HepG2 (cell line): ENCODE measurements at regions of chr17 and their contacts with region 1.

Region 1: GRCh38 chr17:48970224-48970623 is 1.8 kb upstream of the GIP start:
- DNase-seq: no peak
- ATAC-seq: no peak
- H3K4me3 ChIP-seq: no peak overlapping the region
- H3K27ac ChIP-seq: peak overlapping the region; percentile 79
- H3K4me1 ChIP-seq: peaks cover 56% of the 10 kb centered on the region
- H3K27me3 ChIP-seq: no peaks in the 10 kb centered on the region
- CTCF ChIP-seq: no peak
- EP300 ChIP-seq: no peak
- POLR2A ChIP-seq: no peak
- RAD21 ChIP-seq: no peak

Region 2: DNA sequence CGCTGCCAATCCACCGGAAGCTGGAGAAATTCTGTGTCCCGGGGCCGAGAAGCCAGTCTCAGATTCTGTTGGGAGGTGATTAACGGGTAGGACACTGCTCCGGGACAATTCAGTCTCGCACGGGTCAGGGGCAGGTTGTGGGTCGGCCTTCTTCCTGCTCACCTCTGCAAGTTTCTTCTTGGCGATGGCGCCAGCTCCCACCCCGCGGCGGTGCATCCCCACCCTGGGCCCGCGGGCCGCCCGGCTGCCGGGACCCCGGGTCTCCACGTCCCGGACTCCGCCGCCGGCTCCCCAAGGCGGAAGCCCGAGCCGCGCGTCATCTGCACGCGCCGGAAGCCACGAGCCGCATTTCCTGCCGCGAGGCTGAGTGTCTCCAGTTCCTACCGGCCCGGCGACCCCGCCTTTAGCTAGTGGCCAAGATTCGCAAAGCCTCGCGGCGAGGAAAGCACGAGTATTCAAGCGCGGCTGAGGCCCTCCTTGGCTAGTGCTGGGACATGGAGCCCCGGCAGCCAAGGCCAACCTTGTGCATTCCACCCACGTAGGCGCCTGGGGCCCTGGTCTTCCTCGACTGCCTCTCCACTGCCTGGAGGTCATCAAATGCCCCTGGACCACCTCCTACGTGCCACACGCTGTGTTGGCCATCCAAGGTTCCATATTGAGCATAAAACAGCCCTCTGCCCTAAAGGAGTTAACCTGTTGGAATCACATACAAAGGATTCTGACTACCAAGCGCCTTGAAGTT is 25.5 kb before region 1 on chr17 and contains the start of gene SNF8:
- CTCF ChIA-PET with region 1: no interaction called
- POLR2A ChIA-PET with region 1: interaction called, 69 read pairs
- in situ Hi-C with region 1: no loop called
- intact Hi-C with region 1: no loop called
- DNase-seq: peak; percentile 90
- ATAC-seq: peak; percentile 97
- H3K4me3 ChIP-seq: peak within 1 kb of the TSS; percentile 75 to 91 (median 90)
- H3K27ac ChIP-seq: peak within 1 kb of the TSS; percentile 86
- H3K4me1 ChIP-seq: peaks cover 27% of the 10 kb centered on the region
- H3K27me3 ChIP-seq: no peaks in the 10 kb centered on the region; a peak in 1 of 5 replicates
- CTCF ChIP-seq: peak; percentile 35; the same call in 1 of the 2 replicates
- EP300 ChIP-seq: no peak; a peak in 1 of 4 replicates
- POLR2A ChIP-seq: peak; percentile 91 to 92
- RAD21 ChIP-seq: peak; percentile 71; the same call in 1 of the 2 replicates
- total RNA-seq, gene SNF8: 152 and 153 TPM in 2 replicates

Region 3: GRCh38 chr17:48985436-48986245 is 15.4 kb after region 1 on chr17:
- CTCF ChIA-PET with region 1: no interaction called
- POLR2A ChIA-PET with region 1: interaction called, 28 read pairs
- in situ Hi-C with region 1: no loop called
- intact Hi-C with region 1: no loop called
- DNase-seq: no peak
- ATAC-seq: peak; percentile 36
- H3K4me3 ChIP-seq: no peak overlapping the region
- H3K27ac ChIP-seq: no peak overlapping the region
- H3K4me1 ChIP-seq: peaks cover 29% of the 10 kb centered on the region; the same call in 1 of the 2 replicates
- H3K27me3 ChIP-seq: no peaks in the 10 kb centered on the region
- CTCF ChIP-seq: no peak
- EP300 ChIP-seq: no peak
- POLR2A ChIP-seq: no peak
- RAD21 ChIP-seq: no peak

Region 4: DNA sequence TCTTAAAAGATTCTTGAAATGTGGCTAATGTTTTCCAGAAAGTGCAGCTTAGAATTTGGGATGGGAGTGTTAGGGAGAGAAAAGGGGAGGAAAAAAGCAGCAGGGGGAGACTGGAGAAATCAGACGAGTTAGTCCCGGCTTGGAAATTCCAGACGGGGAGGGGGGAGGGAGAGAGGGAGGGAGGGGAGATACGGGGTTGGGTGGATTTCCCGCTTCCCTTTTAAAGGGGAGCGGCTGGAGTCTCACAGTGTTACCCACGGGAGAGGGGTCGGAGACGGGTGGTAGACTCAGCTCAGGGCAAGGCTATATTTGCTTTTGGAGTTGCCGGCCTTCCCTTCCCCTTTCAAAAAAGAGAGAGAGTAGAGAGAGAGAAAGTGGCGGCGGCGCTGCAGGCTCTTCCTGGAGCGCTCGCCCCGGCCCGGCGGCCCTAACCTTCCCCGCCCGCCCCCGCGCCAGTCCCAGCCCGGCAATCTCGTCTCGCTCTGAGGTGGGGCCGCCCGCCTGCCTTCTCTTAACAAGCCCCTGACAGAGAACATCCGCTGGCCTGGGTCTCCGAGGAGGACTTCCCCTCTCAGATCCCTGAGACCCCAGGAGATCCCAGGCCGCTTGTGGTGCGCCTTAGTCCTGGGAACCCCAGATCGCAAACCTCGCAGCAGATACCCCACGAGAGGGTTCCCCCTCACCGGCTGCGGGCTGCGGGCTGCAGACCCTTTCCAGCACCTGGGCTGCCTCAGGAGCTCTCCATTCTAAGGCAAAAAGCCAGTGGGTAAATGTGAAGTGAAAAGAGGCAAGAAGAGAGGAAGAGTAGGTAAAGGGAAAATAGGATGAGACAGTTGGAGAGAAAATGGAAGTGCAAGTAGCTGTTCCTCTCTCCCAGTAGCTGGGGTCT is 33.6 kb after region 1 on chr17:
- CTCF ChIA-PET with region 1: no interaction called
- POLR2A ChIA-PET with region 1: interaction called, 268 read pairs
- in situ Hi-C with region 1: no loop called
- intact Hi-C with region 1: no loop called
- DNase-seq: no peak
- ATAC-seq: peak; percentile 69
- H3K4me3 ChIP-seq: peak overlapping the region; percentile 62 to 97 (median 62)
- H3K27ac ChIP-seq: peak overlapping the region; percentile 95
- H3K4me1 ChIP-seq: peaks cover 72% of the 10 kb centered on the region
- H3K27me3 ChIP-seq: no peaks in the 10 kb centered on the region; a peak in 1 of 5 replicates
- CTCF ChIP-seq: peak; percentile 26; the same call in 1 of the 2 replicates
- EP300 ChIP-seq: no peak
- POLR2A ChIP-seq: no peak
- RAD21 ChIP-seq: no peak

Region 5: GRCh38 chr17:49031965-49032928 is 62.0 kb after region 1 on chr17:
- CTCF ChIA-PET with region 1: no interaction called
- POLR2A ChIA-PET with region 1: interaction called, 14 read pairs
- in situ Hi-C with region 1: no loop called
- intact Hi-C with region 1: no loop called
- DNase-seq: peak; percentile 86
- ATAC-seq: peak; percentile 80
- H3K4me3 ChIP-seq: no peak overlapping the region
- H3K27ac ChIP-seq: no peak overlapping the region
- H3K4me1 ChIP-seq: no peaks in the 10 kb centered on the region
- H3K27me3 ChIP-seq: no peaks in the 10 kb centered on the region
- CTCF ChIP-seq: peak; percentile 92
- EP300 ChIP-seq: no peak
- POLR2A ChIP-seq: no peak
- RAD21 ChIP-seq: peak; percentile 98